Natural killer cell (primary cell): ENCODE measurements at regions of chr11 and their contacts with region 1.

Region 1: GRCh38 chr11:57144531-57145320 is 37.0 kb upstream of the LRRC55 start:
- DNase-seq: no peak
- ATAC-seq: no peak
- H3K4me3 ChIP-seq: no peak overlapping the region
- H3K4me3 Mint-ChIP-seq: no peak overlapping the region
- H3K27ac ChIP-seq: no peak overlapping the region
- H3K27ac Mint-ChIP-seq: no peak overlapping the region
- H3K4me1 ChIP-seq: no peaks in the 10 kb centered on the region
- H3K4me1 Mint-ChIP-seq: no peaks in the 10 kb centered on the region
- H3K27me3 ChIP-seq: no peaks in the 10 kb centered on the region
- H3K27me3 Mint-ChIP-seq: peaks cover 0 to 11% of the 10 kb centered on the region in 2 donors
- CTCF ChIP-seq: no peak

Region 2: GRCh38 chr11:57095417-57095816 is 49.3 kb before region 1 on chr11:
- intact Hi-C with region 1: loop called (anchors 5 kb)
- DNase-seq: no peak
- ATAC-seq: no peak
- H3K4me3 ChIP-seq: no peak overlapping the region
- H3K4me3 Mint-ChIP-seq: no peak overlapping the region
- H3K27ac ChIP-seq: no peak overlapping the region
- H3K27ac Mint-ChIP-seq: no peak overlapping the region
- H3K4me1 ChIP-seq: no peaks in the 10 kb centered on the region
- H3K4me1 Mint-ChIP-seq: no peaks in the 10 kb centered on the region
- H3K27me3 ChIP-seq: no peaks in the 10 kb centered on the region
- H3K27me3 Mint-ChIP-seq: peaks cover 0 to 12% of the 10 kb centered on the region in 2 donors
- CTCF ChIP-seq: no peak

Region 3: DNA sequence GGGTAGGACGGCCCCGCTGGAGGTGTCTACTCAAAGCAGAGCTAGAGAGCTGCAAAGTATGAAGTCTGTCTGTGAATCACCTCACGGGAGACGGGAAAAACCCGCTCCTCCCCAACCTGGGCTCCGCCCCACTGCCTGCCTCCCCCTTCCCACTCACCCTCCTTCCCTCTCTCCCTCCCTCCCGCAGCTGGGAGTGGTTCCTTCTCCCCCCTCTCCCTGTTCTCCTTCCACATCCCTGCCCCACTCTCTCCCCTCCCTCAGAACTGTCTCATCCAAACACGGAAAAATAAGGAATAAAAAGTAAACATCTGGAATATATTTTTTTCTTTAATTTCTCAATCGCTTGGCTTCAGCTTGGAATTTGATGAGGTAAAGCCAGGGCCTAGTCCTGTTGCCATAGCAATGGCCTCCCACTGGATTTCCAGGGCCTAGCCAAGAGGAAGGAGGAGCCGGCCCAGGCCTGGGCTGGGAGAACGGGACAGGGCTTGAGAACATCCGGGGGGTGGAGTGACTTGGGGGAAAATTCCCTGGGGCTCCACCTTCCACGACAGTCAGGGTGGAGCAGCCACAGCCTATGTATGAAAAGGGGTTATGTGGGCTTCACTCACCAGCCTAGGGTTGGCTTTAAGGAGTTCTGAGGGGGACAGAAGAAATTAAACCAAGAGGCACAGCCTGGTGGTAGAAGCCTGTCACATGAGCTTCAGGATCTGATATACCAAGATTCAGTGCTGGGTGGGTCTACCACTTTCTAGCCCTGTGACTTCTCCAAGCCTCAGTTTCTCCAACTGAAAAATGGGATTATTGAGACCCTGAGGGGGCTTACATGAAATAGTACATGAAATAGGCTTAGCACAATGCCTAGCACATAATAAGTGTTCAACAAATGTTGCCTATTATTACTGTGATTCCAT is 177.8 kb after region 1 on chr11:
- intact Hi-C with region 1: no loop called
- DNase-seq: peak in 1 of 2 donors; percentile 36
- ATAC-seq: no peak
- H3K4me3 ChIP-seq: no peak overlapping the region
- H3K4me3 Mint-ChIP-seq: peak overlapping the region; percentile 91
- H3K27ac ChIP-seq: no peak overlapping the region
- H3K27ac Mint-ChIP-seq: peak overlapping the region; percentile 69 to 96
- H3K4me1 ChIP-seq: peaks cover 19% of the 10 kb centered on the region
- H3K4me1 Mint-ChIP-seq: peaks cover 10 to 35% of the 10 kb centered on the region in 2 donors
- H3K27me3 ChIP-seq: no peaks in the 10 kb centered on the region
- H3K27me3 Mint-ChIP-seq: no peaks in the 10 kb centered on the region
- CTCF ChIP-seq: no peak